ENCODE measurements at regions of chr3 and their contacts with region 1.

Region 1: GRCh38 chr3:188947401-188948280 is 224.1 kb upstream of the TPRG1 start:
- DNase-seq: peak; percentile 88 to 95
- H3K4me3 ChIP-seq: peak overlapping the region; percentile 57
- H3K27ac ChIP-seq: peak overlapping the region; percentile 7; the same call in 1 of the 2 replicates
- H3K4me1 ChIP-seq: peaks cover 39% of the 10 kb centered on the region
- H3K27me3 ChIP-seq: no peaks in the 10 kb centered on the region
- CTCF ChIP-seq: peak; percentile 66

Region 2: GRCh38 chr3:188546835-188547670 is 400.6 kb before region 1 on chr3:
- CTCF ChIA-PET with region 1: no interaction called
- POLR2A ChIA-PET with region 1: no interaction called
- intact Hi-C with region 1: no loop called
- DNase-seq: peak; percentile 4 to 86
- H3K4me3 ChIP-seq: no peak overlapping the region
- H3K27ac ChIP-seq: peak overlapping the region; percentile 13
- H3K4me1 ChIP-seq: peaks cover 16% of the 10 kb centered on the region
- H3K27me3 ChIP-seq: no peaks in the 10 kb centered on the region
- CTCF ChIP-seq: no peak

Region 3: DNA sequence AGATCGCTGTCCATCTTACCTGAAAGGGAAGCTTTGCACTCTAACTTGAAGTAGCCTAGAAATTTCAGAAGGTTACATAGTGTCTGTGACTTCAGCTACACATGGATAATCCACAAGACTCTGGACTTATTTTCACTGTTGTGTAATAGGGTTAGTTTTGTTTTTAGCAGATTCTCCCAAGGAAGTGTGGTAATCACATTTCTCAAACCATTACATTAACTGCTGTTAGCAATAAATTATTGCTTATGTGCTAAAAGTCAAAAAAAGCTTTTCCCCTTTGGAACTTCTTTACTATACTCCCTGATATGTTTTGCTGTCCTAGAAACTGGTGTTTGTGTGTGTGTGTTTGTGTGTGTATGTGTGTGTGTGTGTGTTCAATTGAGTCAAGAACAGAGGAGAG is 127.7 kb before region 1 on chr3:
- CTCF ChIA-PET with region 1: no interaction called
- POLR2A ChIA-PET with region 1: interaction called, 4 read pairs
- intact Hi-C with region 1: loop called (anchors 1 kb)
- DNase-seq: no peak
- H3K4me3 ChIP-seq: no peak overlapping the region
- H3K27ac ChIP-seq: no peak overlapping the region
- H3K4me1 ChIP-seq: peaks cover 33% of the 10 kb centered on the region
- H3K27me3 ChIP-seq: no peaks in the 10 kb centered on the region
- CTCF ChIP-seq: no peak

Region 4: DNA sequence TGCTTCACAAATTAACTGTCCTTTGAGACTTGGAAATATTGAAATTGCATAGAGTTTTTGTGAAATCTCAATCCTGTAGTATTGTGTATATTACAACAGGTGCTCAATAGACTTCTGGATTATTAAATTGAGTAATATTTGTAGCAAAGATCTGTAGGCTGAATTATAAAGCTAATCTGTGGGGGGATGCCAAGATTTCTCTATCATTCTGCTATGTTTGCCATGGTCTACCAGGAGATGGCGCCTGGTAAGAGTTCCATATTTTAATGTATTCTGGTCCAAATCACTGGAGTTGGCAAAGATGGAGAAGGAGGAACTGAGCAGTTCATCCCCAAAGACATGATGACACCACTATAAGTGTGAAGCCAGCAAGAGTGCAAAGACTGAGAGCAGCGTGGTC is 116.7 kb before region 1 on chr3:
- CTCF ChIA-PET with region 1: no interaction called
- POLR2A ChIA-PET with region 1: no interaction called
- intact Hi-C with region 1: loop called (anchors 5 kb)
- DNase-seq: no peak
- H3K4me3 ChIP-seq: no peak overlapping the region
- H3K27ac ChIP-seq: no peak overlapping the region
- H3K4me1 ChIP-seq: no peaks in the 10 kb centered on the region
- H3K27me3 ChIP-seq: no peaks in the 10 kb centered on the region
- CTCF ChIP-seq: peak; percentile 48; the same call in 1 of the 2 replicates

Region 5: GRCh38 chr3:188881954-188882641 is 65.5 kb before region 1 on chr3:
- CTCF ChIA-PET with region 1: interaction called, 3 read pairs
- POLR2A ChIA-PET with region 1: interaction called, 11 read pairs
- intact Hi-C with region 1: loop called (anchors 1 kb)
- DNase-seq: peak in 1 of 2 experiments; percentile 96
- H3K4me3 ChIP-seq: no peak overlapping the region
- H3K27ac ChIP-seq: peak overlapping the region; percentile 57
- H3K4me1 ChIP-seq: peaks cover 25% of the 10 kb centered on the region
- H3K27me3 ChIP-seq: no peaks in the 10 kb centered on the region
- CTCF ChIP-seq: no peak

Measured in PC-9 (cell line).